Activated B cell treated with CpG ODN at 0.5 μM for 24 hours (primary cell): ENCODE measurements at regions of chr18 and their contacts with region 1.

Region 1: GRCh38 chr18:63074981-63075404 is 244.6 kb downstream of the BCL2 start:
- DNase-seq: peak; percentile 45
- ATAC-seq: peak; percentile 58
- H3K4me3 Mint-ChIP-seq: peak overlapping the region; percentile 78
- H3K27ac Mint-ChIP-seq: peak overlapping the region; percentile 0
- H3K4me1 Mint-ChIP-seq: peaks cover 25% of the 10 kb centered on the region
- H3K27me3 Mint-ChIP-seq: no peaks in the 10 kb centered on the region
- CTCF ChIP-seq: no peak

Region 2: DNA sequence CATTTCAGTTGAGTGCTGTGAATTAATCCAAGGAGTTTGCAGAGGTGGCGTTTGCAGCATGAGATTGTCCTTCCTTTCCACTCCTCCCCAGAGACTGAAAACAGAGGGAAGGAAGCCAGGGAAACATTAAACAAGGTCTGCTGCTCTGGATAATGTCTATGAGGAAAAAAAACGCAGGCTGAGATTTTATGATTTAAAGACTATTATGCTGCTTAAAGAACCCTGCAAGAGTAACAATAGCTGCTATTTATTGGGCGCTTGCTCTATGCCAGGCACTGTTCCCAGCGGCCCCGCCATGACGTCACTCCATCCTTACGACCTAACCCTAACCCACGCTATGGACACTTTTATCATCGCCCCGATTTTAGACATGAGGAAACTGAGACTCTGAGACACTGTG is 22.2 kb after region 1 on chr18:
- CTCF ChIA-PET with region 1: no interaction called
- POLR2A ChIA-PET with region 1: no interaction called
- intact Hi-C with region 1: loop called (anchors 2 kb)
- DNase-seq: no peak
- ATAC-seq: no peak
- H3K4me3 Mint-ChIP-seq: no peak overlapping the region
- H3K27ac Mint-ChIP-seq: no peak overlapping the region
- H3K4me1 Mint-ChIP-seq: peaks cover 14% of the 10 kb centered on the region
- H3K27me3 Mint-ChIP-seq: peaks cover 10% of the 10 kb centered on the region
- CTCF ChIP-seq: no peak

Region 3: DNA sequence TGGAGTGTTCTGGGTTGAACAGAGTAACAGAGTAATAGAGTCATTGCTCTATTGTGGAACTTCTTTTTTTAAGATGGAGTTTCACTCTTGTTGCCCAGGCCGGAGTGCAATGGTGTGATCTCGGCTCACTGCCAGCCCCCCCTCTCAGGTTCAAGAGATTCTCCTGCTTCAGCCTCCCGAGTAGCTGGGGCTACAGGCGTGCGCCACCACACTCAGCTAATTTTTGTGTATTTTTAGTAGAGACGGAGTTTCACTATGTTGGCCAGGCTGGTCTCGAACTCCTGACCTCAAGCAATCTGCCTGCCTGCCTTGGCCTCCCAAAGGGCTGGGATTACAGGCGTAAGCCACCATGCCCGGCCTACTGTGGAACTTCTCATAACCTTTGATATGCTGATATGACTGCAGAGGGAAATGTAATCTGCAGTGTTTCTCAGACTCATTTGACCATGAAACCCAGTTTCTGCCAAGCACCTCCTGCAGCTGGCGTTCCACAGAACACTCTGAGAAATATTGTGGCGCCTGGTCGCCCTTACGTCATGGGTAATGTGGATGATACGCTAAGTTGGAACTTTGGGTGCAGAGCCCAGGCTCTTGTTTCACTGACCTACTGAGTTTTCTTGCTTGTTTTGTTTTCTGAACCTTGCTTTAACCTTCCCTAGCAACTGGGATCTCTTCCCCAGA is 30.8 kb after region 1 on chr18:
- CTCF ChIA-PET with region 1: no interaction called
- POLR2A ChIA-PET with region 1: no interaction called
- intact Hi-C with region 1: loop called (anchors 2 kb)
- DNase-seq: no peak
- ATAC-seq: peak; percentile 80
- H3K4me3 Mint-ChIP-seq: peak overlapping the region; percentile 73
- H3K27ac Mint-ChIP-seq: peak overlapping the region; percentile 59
- H3K4me1 Mint-ChIP-seq: peaks cover 30% of the 10 kb centered on the region
- H3K27me3 Mint-ChIP-seq: peaks cover 6% of the 10 kb centered on the region
- CTCF ChIP-seq: no peak